CD4-positive, alpha-beta memory T cell (primary cell): ENCODE measurements at regions of chr11 and their contacts with region 1.

Region 1: DNA sequence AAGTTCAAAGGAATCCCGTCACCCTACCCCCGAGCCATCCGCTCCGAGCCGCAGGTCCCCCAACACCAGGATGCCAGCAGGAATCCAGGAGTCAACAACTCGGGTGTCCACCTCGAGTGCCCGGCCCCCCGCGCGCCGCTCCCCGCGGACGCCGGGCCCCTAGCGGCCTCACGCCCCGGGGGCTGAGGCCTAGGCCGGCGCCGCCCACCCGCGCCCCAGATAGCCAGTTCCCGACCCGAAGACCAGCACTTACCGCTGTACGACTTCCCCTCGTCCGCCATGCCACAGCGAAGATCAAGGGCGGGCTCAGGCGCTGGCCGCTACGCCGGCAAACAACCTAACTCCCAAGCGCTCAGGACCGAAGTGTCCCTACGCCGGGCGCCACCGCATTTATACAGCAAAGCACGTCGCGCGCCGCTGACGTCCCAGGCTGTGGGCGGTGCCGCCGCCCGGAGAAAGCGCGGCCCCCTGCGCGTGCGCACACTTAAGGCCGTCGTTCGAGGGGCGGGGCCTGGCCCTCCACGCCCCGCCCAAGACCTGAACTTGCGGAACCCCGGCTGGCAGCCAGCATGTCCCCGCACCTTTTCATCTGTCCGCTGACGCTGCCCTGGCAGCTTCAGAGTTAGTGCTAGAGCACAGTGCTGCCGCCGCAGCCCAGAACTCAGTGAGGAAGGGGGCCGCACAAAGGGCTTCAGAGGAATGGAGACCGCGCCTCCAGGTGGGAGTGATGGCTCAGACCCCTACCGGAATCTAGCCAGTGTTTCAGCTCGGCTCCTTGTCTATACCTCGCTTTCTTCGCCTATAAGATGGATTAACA is at the start of gene NXF1:
- DNase-seq: peak; percentile 90 to 98 (median 96)
- H3K4me3 ChIP-seq: peak within 1 kb of the TSS; percentile 87 to 93
- H3K4me3 Mint-ChIP-seq: peak within 1 kb of the TSS; percentile 97 to 100 (median 99)
- H3K27ac ChIP-seq: peak within 1 kb of the TSS; percentile 94
- H3K27ac Mint-ChIP-seq: peak within 1 kb of the TSS; percentile 97 to 100 (median 99)
- H3K4me1 ChIP-seq: peaks cover 22% of the 10 kb centered on the region
- H3K4me1 Mint-ChIP-seq: peaks cover 20 to 43% (median 31%) of the 10 kb centered on the region in 4 donors
- H3K27me3 ChIP-seq: no peaks in the 10 kb centered on the region
- H3K27me3 Mint-ChIP-seq: peaks cover 0 to 2% of the 10 kb centered on the region in 2 donors
- total RNA-seq, gene NXF1: 195 to 196 TPM

Region 2: GRCh38 chr11:62737196-62737595 is 68.1 kb before region 1 on chr11:
- CTCF ChIA-PET with region 1: no interaction called
- POLR2A ChIA-PET with region 1: no interaction called
- intact Hi-C with region 1: no loop called
- DNase-seq: no peak
- H3K4me3 ChIP-seq: no peak overlapping the region
- H3K4me3 Mint-ChIP-seq: no peak overlapping the region
- H3K27ac ChIP-seq: no peak overlapping the region
- H3K27ac Mint-ChIP-seq: no peak overlapping the region
- H3K4me1 ChIP-seq: no peaks in the 10 kb centered on the region
- H3K4me1 Mint-ChIP-seq: peaks cover 6 to 8% (median 7%) of the 10 kb centered on the region in 4 donors
- H3K27me3 ChIP-seq: no peaks in the 10 kb centered on the region
- H3K27me3 Mint-ChIP-seq: no peaks in the 10 kb centered on the region

Region 3: DNA sequence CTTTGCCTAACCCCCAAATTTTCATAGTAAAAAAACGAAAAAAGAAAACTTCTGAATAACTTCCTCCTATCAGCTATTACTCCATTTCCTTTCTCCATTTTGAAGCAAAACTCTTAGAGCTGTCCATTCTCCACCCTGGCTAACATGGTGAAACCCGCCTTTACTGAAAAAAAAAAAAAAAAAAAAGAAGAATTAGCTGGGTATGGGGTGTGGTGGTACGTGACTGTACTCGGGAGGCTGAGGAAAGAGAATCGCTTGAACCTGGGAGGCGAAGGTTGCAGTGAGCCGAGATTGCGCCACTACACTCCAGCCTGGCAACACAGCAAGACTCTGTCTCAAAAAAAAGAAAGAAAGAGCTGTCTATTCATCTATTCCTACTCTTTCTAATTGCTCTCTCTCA is 11.3 kb after region 1 on chr11:
- CTCF ChIA-PET with region 1: interaction called, 7 read pairs
- POLR2A ChIA-PET with region 1: interaction called, 18 read pairs
- intact Hi-C with region 1: no loop called
- DNase-seq: no peak
- H3K4me3 ChIP-seq: no peak overlapping the region
- H3K4me3 Mint-ChIP-seq: no peak overlapping the region
- H3K27ac ChIP-seq: no peak overlapping the region
- H3K27ac Mint-ChIP-seq: no peak overlapping the region
- H3K4me1 ChIP-seq: no peaks in the 10 kb centered on the region
- H3K4me1 Mint-ChIP-seq: peaks cover 0 to 3% (median 0%) of the 10 kb centered on the region in 4 donors
- H3K27me3 ChIP-seq: no peaks in the 10 kb centered on the region
- H3K27me3 Mint-ChIP-seq: no peaks in the 10 kb centered on the region

Region 4: GRCh38 chr11:63459586-63459985 is 654.3 kb after region 1 on chr11:
- CTCF ChIA-PET with region 1: no interaction called
- POLR2A ChIA-PET with region 1: no interaction called
- intact Hi-C with region 1: no loop called
- DNase-seq: no peak
- H3K4me3 ChIP-seq: no peak overlapping the region
- H3K4me3 Mint-ChIP-seq: no peak overlapping the region
- H3K27ac ChIP-seq: no peak overlapping the region
- H3K27ac Mint-ChIP-seq: no peak overlapping the region
- H3K4me1 ChIP-seq: no peaks in the 10 kb centered on the region
- H3K4me1 Mint-ChIP-seq: no peaks in the 10 kb centered on the region
- H3K27me3 ChIP-seq: peaks cover 9% of the 10 kb centered on the region
- H3K27me3 Mint-ChIP-seq: peaks cover 7 to 9% of the 10 kb centered on the region in 2 donors